ENCODE measurements at regions of chr11 and their contacts with region 1.

Region 1: DNA sequence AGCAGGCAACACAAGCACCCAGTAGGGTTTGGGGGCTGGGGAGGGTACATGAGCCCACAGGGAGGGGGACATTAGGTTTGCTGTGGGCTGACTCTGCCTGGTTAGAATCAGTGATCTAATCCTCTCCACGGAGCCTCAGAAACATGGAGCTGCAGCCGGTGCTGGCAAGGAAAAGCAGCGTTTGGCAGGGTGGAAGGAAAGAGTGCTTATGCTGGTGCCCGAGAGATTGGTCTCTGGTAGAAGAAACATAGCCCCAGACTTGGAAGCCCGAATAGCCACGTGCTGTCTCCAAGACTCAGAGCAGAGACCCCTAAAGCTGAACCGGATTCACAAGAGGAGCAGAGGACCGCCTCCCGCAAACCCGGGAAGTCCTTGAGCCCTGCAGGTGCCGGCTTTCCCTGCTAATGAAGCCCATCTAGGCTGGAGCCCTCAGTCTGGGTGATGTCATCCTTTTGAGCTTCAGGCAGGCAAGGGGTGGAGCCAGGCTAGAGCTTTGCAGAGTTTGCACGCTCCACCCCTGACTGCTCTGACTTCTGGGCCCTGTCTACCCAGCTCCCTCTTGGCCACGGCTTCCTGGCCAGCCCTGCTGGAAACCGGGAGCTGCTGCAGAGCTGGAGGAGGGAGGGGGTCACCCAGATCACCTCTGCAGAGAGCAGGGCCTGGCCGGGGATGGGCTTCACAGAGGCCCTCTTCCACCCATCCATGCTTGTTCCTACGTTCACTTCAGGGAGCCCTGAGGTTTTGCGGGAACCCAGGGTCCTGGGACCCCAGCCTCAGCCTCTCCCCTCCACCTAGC is 35.0 kb upstream of the JAM3 start:
- DNase-seq: peak; percentile 47 to 82 (median 62)
- ATAC-seq: peak; percentile 81
- H3K4me3 ChIP-seq: peak overlapping the region; percentile 39
- H3K4me3 Mint-ChIP-seq: peak overlapping the region; percentile 79
- H3K27ac ChIP-seq: no peak overlapping the region
- H3K27ac Mint-ChIP-seq: peak overlapping the region; percentile 81
- H3K4me1 ChIP-seq: peaks cover 53% of the 10 kb centered on the region
- H3K4me1 Mint-ChIP-seq: peaks cover 71% of the 10 kb centered on the region
- H3K27me3 ChIP-seq: no peaks in the 10 kb centered on the region
- H3K27me3 Mint-ChIP-seq: no peaks in the 10 kb centered on the region
- CTCF ChIP-seq: no peak

Region 2: DNA sequence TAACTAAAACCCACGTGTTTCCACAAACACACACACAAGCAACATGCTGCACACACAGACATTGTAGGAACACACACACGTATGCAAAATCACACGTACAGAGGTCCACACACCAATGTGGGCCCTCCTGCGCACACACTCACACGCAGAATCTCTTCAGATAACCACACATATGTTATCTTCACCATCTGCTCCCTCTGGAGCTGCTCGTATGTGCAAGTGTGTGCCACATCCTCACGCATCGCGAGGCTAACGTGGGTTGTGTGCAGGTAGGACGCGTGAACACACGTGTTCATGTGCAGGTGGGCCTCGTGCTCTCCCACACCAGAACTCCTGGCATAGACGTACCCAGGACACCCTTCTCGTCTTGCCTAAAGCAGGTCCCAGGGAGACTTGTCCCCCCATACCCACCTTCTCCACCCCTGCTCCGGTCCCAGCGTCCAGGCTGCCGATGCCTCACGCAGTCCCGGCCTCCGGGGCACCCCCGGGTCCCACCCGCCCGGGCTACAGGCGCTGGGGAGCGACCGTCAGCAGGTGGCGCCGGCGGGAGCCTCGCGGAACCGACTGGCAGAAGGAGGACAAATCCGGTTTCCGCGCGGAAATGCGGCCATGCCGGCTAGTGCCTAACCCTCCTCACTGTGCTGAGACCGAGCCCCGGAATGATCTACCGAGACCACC is 66.8 kb before region 1 on chr11:
- CTCF ChIA-PET with region 1: no interaction called
- POLR2A ChIA-PET with region 1: interaction called, 3 read pairs
- intact Hi-C with region 1: loop called in 1 of 2 experiments (anchors 5 kb)
- DNase-seq: peak; percentile 45 to 76 (median 62)
- ATAC-seq: peak; percentile 85
- H3K4me3 ChIP-seq: peak overlapping the region; percentile 53
- H3K4me3 Mint-ChIP-seq: peak overlapping the region; percentile 86
- H3K27ac ChIP-seq: no peak overlapping the region
- H3K27ac Mint-ChIP-seq: peak overlapping the region; percentile 45
- H3K4me1 ChIP-seq: peaks cover 14% of the 10 kb centered on the region
- H3K4me1 Mint-ChIP-seq: peaks cover 13% of the 10 kb centered on the region
- H3K27me3 ChIP-seq: peaks cover 2 to 5% of the 10 kb centered on the region in 2 experiments
- H3K27me3 Mint-ChIP-seq: peaks cover 19% of the 10 kb centered on the region
- CTCF ChIP-seq: peak; percentile 66

Measured in CD4-positive, alpha-beta T cell (primary cell).